Head of caudate nucleus (tissue), 42 donors: ENCODE measurements at regions of chr5 and their contacts with region 1.

Region 1: GRCh38 chr5:122413722-122414121 is 101.7 kb downstream of the SNCAIP start:
- DNase-seq: no peak

Region 2: GRCh38 chr5:122192497-122193496 is 220.9 kb before region 1 on chr5:
- intact Hi-C with region 1: loop called (anchors 5 kb)
- DNase-seq: peak in 24 of 42 donors; percentile 7 to 82 (median 53)

Region 3: DNA sequence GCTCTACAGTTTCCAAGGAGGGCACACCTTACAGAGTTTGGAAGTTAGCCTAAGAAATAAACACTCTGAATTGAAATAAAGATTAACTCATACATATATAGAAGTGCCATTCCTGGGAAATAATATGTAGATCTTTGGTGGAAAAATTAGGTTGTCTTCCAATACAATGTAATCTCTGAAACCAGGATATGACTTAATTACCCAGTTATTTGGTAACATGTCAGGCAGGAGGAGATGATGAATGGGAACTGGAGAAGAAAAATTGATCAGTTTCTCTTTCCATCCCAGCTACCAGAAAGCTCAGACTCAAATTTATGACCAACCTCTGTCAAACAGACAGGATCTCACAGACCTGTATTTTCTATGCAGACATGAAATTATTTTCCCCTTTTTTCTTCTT is 146.0 kb after region 1 on chr5:
- intact Hi-C with region 1: no loop called
- DNase-seq: no peak